Endothelial cell of umbilical vein (primary cell): ENCODE measurements at regions of chr20 and their contacts with region 1.

Region 1: GRCh38 chr20:36861875-36862801 is 13.8 kb upstream of the TLDC2 start:
- DNase-seq: peak; percentile 44
- H3K4me3 ChIP-seq: peak overlapping the region; percentile 27 to 54 (median 41)
- H3K27ac ChIP-seq: no peak overlapping the region
- H3K4me1 ChIP-seq: peaks cover 18% of the 10 kb centered on the region
- H3K27me3 ChIP-seq: no peaks in the 10 kb centered on the region
- CTCF ChIP-seq: no peak
- POLR2A ChIP-seq: peak; percentile 45

Region 2: GRCh38 chr20:36550797-36551299 is 311.3 kb before region 1 on chr20:
- CTCF ChIA-PET with region 1: no interaction called
- POLR2A ChIA-PET with region 1: no interaction called
- dilution Hi-C with region 1: no loop called
- intact Hi-C with region 1: loop called (anchors 10 kb)
- DNase-seq: no peak
- H3K4me3 ChIP-seq: no peak overlapping the region
- H3K27ac ChIP-seq: no peak overlapping the region
- H3K4me1 ChIP-seq: no peaks in the 10 kb centered on the region
- H3K27me3 ChIP-seq: no peaks in the 10 kb centered on the region
- CTCF ChIP-seq: no peak
- POLR2A ChIP-seq: no peak

Region 3: GRCh38 chr20:36754656-36755222 is 107.4 kb before region 1 on chr20:
- CTCF ChIA-PET with region 1: interaction called, 13 read pairs
- POLR2A ChIA-PET with region 1: no interaction called
- dilution Hi-C with region 1: no loop called
- intact Hi-C with region 1: no loop called
- DNase-seq: peak; percentile 78
- H3K4me3 ChIP-seq: no peak overlapping the region
- H3K27ac ChIP-seq: peak overlapping the region; percentile 16
- H3K4me1 ChIP-seq: peaks cover 27% of the 10 kb centered on the region
- H3K27me3 ChIP-seq: no peaks in the 10 kb centered on the region
- CTCF ChIP-seq: peak; percentile 71 to 75
- POLR2A ChIP-seq: no peak

Region 4: GRCh38 chr20:36792422-36792821 is 69.7 kb before region 1 on chr20:
- CTCF ChIA-PET with region 1: interaction called, 18 read pairs
- POLR2A ChIA-PET with region 1: no interaction called
- dilution Hi-C with region 1: no loop called
- intact Hi-C with region 1: loop called (anchors 5 kb)
- DNase-seq: peak; percentile 68
- H3K4me3 ChIP-seq: no peak overlapping the region
- H3K27ac ChIP-seq: no peak overlapping the region
- H3K4me1 ChIP-seq: no peaks in the 10 kb centered on the region
- H3K27me3 ChIP-seq: no peaks in the 10 kb centered on the region
- CTCF ChIP-seq: peak; percentile 42 to 69
- POLR2A ChIP-seq: no peak

Region 5: GRCh38 chr20:36835453-36836198 is 26.5 kb before region 1 on chr20:
- CTCF ChIA-PET with region 1: interaction called, 59 read pairs
- POLR2A ChIA-PET with region 1: interaction called, 7 read pairs
- dilution Hi-C with region 1: no loop called
- intact Hi-C with region 1: loop called (anchors 2 kb)
- DNase-seq: peak; percentile 94
- H3K4me3 ChIP-seq: no peak overlapping the region
- H3K27ac ChIP-seq: peak overlapping the region; percentile 43
- H3K4me1 ChIP-seq: peaks cover 38% of the 10 kb centered on the region
- H3K27me3 ChIP-seq: no peaks in the 10 kb centered on the region
- CTCF ChIP-seq: no peak
- POLR2A ChIP-seq: peak; percentile 69

Region 6: GRCh38 chr20:37131486-37131885 is 269.3 kb after region 1 on chr20:
- CTCF ChIA-PET with region 1: no interaction called
- POLR2A ChIA-PET with region 1: no interaction called
- dilution Hi-C with region 1: no loop called
- intact Hi-C with region 1: no loop called
- DNase-seq: no peak
- H3K4me3 ChIP-seq: no peak overlapping the region
- H3K27ac ChIP-seq: no peak overlapping the region
- H3K4me1 ChIP-seq: no peaks in the 10 kb centered on the region
- H3K27me3 ChIP-seq: peaks cover 11 to 14% of the 10 kb centered on the region in 2 experiments
- CTCF ChIP-seq: no peak
- POLR2A ChIP-seq: no peak